ENCODE measurements at regions of chr19 and their contacts with region 1.

Region 1: DNA sequence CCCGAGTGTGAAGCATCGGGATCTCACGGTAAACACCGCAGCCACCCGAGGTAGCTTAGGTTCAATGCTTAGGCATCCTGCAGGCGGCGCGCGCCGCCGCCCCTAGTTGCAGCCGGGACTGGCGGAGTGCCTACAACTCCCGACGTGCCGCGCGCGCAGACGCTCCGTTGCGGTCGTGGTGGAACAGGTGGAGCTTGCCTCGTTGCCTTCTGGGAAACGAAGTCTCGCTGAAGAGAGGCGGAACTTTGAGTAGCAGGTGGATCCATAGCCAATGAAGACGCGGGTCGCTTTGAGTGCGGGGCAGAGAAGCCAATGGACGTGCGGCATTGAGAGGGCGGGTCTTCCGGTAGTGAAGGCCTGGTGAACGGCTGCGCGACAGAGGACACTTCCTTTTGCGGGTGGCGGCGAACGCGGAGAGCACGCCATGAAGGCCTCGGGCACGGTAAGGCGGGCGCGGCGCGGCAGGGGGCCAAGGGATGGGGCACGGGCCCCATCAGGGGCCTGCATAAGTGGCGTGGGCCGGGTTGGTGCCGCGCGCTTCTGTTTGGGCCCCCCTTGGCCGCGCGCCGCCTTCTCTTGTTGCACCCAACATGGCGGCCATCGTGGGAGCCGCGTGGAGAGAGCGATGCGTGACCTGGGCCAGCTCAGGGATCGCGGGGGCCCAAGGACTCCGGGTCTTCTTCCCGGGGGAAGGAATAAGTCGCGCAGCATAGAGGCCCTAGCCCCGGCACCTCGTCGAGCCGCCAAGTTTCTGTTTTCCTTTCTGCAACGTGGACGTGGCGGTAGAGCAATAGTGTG is at the start of gene RPL18A:
- DNase-seq: peak; percentile 99
- H3K4me3 Mint-ChIP-seq: peak within 1 kb of the TSS; percentile 94
- H3K27ac Mint-ChIP-seq: peak within 1 kb of the TSS; percentile 98
- H3K4me1 Mint-ChIP-seq: peaks cover 29% of the 10 kb centered on the region
- H3K27me3 Mint-ChIP-seq: no peaks in the 10 kb centered on the region
- total RNA-seq, gene RPL18A: 2,698 and 2,718 TPM in 2 replicates

Region 2: GRCh38 chr19:17448131-17448967 is 411.4 kb before region 1 on chr19 and contains the start of gene TMEM221:
- intact Hi-C with region 1: loop called (anchors 2 kb)
- DNase-seq: peak; percentile 86
- H3K4me3 Mint-ChIP-seq: peak within 1 kb of the TSS; percentile 38
- H3K27ac Mint-ChIP-seq: no peak within 1 kb of the TSS
- H3K4me1 Mint-ChIP-seq: peaks cover 12% of the 10 kb centered on the region
- H3K27me3 Mint-ChIP-seq: peaks cover 12% of the 10 kb centered on the region
- total RNA-seq, gene TMEM221: not detected in 2 replicates

Region 3: GRCh38 chr19:17703824-17704463 is 155.8 kb before region 1 on chr19:
- intact Hi-C with region 1: loop called (anchors 1 kb)
- DNase-seq: peak; percentile 92
- H3K4me3 Mint-ChIP-seq: no peak overlapping the region
- H3K27ac Mint-ChIP-seq: no peak overlapping the region
- H3K4me1 Mint-ChIP-seq: no peaks in the 10 kb centered on the region
- H3K27me3 Mint-ChIP-seq: peaks cover 5% of the 10 kb centered on the region

Region 4: DNA sequence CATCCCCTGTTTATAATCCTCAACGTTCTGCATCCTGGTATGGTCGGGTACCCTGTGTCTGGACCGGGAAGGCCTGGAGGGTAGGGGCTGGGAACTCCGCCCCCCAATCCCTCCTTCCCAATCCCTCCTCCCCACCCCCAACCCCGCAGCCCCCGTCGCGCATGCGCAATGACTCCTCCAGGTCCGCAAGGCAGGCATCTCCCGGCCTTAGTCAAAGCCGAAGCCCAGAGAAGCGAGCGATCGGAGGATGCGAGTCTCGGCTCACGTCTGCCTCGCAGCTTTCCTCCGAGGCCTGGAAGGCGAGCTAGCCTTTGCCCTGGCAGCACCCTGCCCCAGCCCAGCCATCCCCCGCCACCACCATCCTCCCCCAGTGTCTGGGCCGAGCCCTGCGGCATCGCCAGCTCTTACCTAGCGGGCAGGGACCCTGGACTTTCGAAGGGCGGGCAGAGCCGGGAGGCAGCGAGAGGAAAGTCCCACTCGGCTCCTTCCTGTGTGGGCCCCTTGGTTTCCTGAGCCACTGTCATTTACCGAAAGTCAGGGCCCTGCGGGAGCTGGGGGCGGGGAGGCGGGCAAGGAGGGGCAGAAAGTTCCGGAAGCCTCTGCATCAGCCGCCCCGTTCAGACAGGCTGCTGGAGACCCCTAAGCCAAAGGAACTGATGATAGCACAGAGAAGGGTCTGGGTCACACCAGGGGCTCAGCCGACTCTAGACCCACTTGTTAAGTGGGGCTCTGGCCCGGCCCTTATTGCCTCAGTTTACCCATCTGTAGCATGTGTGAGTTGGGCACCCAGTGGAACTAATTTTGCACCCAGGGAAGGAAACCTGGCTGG is 12.0 kb before region 1 on chr19 and contains the start of gene JAK3:
- intact Hi-C with region 1: loop called (anchors 1 kb)
- DNase-seq: peak; percentile 97
- H3K4me3 Mint-ChIP-seq: peak within 1 kb of the TSS; percentile 94
- H3K27ac Mint-ChIP-seq: peak within 1 kb of the TSS; percentile 94
- H3K4me1 Mint-ChIP-seq: peaks cover 59% of the 10 kb centered on the region
- H3K27me3 Mint-ChIP-seq: peaks cover 1% of the 10 kb centered on the region
- total RNA-seq, gene JAK3: 226 and 239 TPM in 2 replicates

Region 5: DNA sequence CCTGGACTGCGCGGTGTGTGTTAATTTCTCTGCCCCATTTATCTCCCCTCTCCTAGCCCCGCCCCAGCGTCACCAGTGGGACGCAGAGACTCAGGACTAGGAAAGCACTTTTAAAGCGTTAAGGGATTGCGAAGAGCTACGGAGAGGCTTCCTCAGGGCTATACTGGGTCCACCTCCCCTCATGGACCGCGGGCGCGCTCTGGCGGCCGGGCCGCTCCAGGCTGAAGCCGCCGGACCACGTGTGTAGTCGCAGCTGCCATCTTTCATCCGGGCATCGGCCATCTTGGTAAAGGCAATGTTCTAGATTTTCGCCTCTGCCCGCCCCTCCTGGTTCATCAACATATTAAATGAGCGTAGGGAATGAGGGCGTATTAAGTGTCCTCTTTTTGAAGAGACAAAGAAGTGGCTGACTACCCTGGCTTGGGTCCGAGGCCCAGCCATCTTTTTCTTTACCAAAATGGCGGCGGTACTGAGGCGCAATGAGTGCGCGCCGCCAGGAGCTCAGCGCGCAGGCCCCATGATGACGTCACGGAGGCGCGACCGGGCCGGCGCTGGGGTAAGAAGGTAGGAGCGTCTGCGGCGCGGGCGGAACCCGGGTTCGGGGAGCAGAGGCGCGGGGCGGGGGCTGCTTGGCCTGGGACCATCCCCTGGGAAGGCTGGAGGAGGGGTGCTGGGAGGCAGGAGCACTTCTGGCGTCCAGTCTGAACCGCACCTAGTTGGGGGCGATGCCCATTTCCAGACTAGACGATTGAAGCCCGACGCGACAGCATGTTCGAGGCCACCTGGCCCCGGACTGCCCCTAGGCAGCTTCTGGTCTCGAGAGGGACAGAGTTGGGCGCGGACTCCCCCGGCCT is 73.0 kb after region 1 on chr19 and contains the start of gene CCDC124:
- intact Hi-C with region 1: loop called (anchors 1 kb)
- DNase-seq: peak; percentile 98
- H3K4me3 Mint-ChIP-seq: peak within 1 kb of the TSS; percentile 92
- H3K27ac Mint-ChIP-seq: peak within 1 kb of the TSS; percentile 94
- H3K4me1 Mint-ChIP-seq: peaks cover 18% of the 10 kb centered on the region
- H3K27me3 Mint-ChIP-seq: no peaks in the 10 kb centered on the region
- total RNA-seq, gene CCDC124: 126 and 136 TPM in 2 replicates

Region 6: GRCh38 chr19:18000935-18001778 is 141.4 kb after region 1 on chr19:
- intact Hi-C with region 1: loop called (anchors 1 kb)
- DNase-seq: peak; percentile 97
- H3K4me3 Mint-ChIP-seq: peak overlapping the region; percentile 93
- H3K27ac Mint-ChIP-seq: peak overlapping the region; percentile 99
- H3K4me1 Mint-ChIP-seq: peaks cover 15% of the 10 kb centered on the region
- H3K27me3 Mint-ChIP-seq: no peaks in the 10 kb centered on the region

Region 7: DNA sequence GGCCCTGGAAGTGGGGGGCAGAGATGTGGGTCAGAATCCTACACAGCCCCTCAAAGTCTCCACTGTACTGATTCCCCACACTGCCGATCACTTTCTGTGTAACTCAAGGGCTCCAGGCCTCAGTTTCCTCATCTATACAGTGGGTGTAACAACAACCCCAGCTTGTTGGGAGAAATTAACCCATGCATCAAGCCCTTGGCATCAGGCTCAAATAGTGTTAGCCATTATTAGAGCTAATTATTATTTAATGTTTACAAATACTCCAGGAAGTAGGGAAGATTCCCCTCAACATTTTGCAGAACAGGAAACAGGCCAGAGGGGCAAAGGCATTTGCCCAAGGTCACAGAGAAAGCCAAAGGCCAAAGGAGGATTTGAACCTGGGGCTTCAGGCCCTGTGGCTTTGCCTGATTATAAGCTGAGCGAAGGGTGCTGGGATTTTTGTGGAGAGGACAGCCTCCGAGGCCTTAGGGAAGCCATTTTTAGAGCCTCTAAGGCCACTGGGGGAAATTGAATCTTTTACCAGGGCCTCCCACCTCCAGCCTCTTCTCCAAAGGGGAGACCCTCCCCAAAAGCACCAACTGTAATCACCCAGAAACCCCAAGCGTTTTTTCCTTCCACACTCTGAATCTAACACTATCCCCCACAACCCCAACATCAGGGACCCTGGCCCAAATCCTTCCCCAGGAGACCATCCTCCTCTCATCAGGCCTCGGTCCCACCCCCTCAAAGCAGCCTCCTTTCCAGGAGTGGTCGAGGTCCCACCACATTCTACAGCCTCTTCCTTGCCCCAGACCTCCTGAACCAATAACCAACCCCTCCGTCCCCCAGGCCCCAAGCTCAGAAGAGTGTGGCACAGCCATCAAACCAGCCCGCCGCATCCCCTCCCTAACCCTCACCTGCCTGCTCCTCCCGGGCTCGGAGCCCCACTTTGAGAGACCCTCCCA is 682.5 kb after region 1 on chr19:
- intact Hi-C with region 1: no loop called
- DNase-seq: peak; percentile 72
- H3K4me3 Mint-ChIP-seq: peak overlapping the region; percentile 96
- H3K27ac Mint-ChIP-seq: peak overlapping the region; percentile 88
- H3K4me1 Mint-ChIP-seq: peaks cover 22% of the 10 kb centered on the region
- H3K27me3 Mint-ChIP-seq: no peaks in the 10 kb centered on the region

Measured in activated CD4-positive, alpha-beta T cell treated with anti-CD3 and anti-CD28 coated beads, Interleukin-2, amount 10 ng/mL, durations not matched to agents 24 days and 14 days (primary cell).